Activated CD4-positive, alpha-beta T cell treated with anti-CD3 and anti-CD28 coated beads for 36 hours (primary cell): ENCODE measurements at regions of chr16 and their contacts with region 1.

Region 1: GRCh38 chr16:12323007-12323758 is 346.6 kb downstream of the SNX29 start:
- DNase-seq: peak; percentile 76
- ATAC-seq: peak; percentile 90
- H3K4me3 Mint-ChIP-seq: no peak overlapping the region
- H3K27ac Mint-ChIP-seq: peak overlapping the region; percentile 53
- H3K4me1 Mint-ChIP-seq: peaks cover 15% of the 10 kb centered on the region
- H3K27me3 Mint-ChIP-seq: no peaks in the 10 kb centered on the region

Region 2: DNA sequence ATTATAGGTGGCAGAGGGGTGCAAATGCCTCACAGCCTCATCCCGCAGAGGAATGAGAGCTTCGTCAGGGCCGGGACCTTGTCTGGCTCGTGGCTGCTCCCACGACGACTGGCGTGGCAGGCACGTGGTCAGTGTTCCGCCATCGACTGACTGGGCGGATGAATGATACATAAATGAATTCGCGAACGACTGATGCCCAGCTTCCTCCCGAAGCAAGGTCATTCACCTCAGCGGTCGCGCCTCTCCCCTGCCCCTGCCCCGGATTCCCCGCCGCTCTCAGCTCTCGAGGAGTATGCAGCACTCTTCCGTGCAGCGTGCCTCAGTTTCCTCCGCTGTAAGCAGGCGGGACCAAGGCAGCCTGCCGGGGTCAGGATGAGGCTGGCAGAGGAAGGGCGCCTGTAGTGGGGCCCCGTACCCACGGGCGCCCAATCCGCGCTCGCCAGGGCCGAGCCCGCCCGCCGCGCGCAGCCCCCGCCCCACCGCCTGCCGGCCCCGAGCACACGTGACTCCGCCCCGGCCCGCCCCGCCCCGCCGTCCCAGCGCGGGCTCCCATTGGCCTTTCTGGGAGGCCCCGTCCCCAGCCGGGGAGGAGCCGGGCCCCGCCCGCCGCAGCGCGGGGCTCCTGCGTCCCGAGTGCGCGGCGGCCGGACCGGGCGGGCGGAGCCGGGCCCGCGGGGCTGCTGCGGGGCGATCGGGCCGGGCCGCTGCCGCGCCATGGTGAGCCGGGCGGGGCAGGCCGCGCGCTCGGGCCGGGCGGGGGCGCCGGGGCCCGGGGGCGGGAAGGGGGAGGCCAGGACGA is 655.2 kb before region 1 on chr16 and contains the start of gene SNN:
- CTCF ChIA-PET with region 1: no interaction called
- POLR2A ChIA-PET with region 1: no interaction called
- intact Hi-C with region 1: loop called in 1 of 2 experiments (anchors 5 kb)
- DNase-seq: peak; percentile 93
- ATAC-seq: peak; percentile 90
- H3K4me3 Mint-ChIP-seq: peak within 1 kb of the TSS; percentile 72
- H3K27ac Mint-ChIP-seq: no peak within 1 kb of the TSS
- H3K4me1 Mint-ChIP-seq: peaks cover 73% of the 10 kb centered on the region
- H3K27me3 Mint-ChIP-seq: no peaks in the 10 kb centered on the region
- total RNA-seq, gene SNN: 6.0 to 7.2 TPM

Region 3: DNA sequence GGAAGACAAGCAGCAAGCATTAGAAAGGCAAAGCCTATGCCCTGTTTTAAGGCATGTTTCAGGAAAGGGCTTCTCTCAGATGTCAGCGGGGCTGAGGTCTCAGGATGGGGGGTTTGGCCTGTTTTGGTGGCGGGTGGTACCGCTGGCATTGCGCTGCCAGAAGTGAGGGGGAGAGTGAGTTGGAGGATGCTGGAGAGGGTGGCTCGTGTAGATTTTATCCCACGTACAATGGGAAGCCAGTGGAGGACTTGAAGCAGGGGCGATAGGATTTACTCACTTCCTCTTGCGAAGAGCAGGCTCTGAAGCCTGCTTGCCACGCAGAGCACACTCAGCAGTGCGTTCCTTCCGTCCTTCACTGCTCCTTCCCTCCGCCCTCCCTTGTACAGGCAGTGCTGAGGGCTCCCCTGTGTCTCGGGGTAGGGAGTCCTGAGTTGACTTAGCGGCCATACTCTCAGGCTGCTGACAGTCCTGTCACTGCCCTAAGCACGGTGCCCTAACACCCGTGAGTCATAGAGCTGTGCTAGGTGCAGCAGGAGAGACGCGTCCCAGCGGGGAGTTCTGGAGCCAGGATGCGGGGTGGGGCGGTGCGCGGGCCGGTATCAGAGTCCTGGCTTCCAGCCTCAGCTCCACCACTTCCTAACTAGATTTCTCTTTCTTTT is 233.6 kb before region 1 on chr16:
- CTCF ChIA-PET with region 1: no interaction called
- POLR2A ChIA-PET with region 1: no interaction called
- intact Hi-C with region 1: loop called in 1 of 2 experiments (anchors 10 kb)
- DNase-seq: peak; percentile 71
- ATAC-seq: peak; percentile 96
- H3K4me3 Mint-ChIP-seq: peak overlapping the region; percentile 64
- H3K27ac Mint-ChIP-seq: peak overlapping the region; percentile 89
- H3K4me1 Mint-ChIP-seq: peaks cover 40% of the 10 kb centered on the region
- H3K27me3 Mint-ChIP-seq: no peaks in the 10 kb centered on the region